ENCODE measurements at regions of chr7 and their contacts with region 1.

Region 1: GRCh38 chr7:100538654-100539435 is at the start of gene AGFG2:
- DNase-seq: peak; percentile 100
- H3K4me3 ChIP-seq: peak within 1 kb of the TSS; percentile 55 to 97 (median 90)
- H3K27ac ChIP-seq: peak within 1 kb of the TSS in 46 of 59 donors; percentile 14 to 93 (median 78)
- H3K27me3 ChIP-seq: no peaks in the 10 kb centered on the region
- CTCF ChIP-seq: peak in 26 of 56 donors; percentile 4 to 49 (median 17)
- total RNA-seq, gene AGFG2: 26.9 to 118 (median 44.7) TPM

Region 2: DNA sequence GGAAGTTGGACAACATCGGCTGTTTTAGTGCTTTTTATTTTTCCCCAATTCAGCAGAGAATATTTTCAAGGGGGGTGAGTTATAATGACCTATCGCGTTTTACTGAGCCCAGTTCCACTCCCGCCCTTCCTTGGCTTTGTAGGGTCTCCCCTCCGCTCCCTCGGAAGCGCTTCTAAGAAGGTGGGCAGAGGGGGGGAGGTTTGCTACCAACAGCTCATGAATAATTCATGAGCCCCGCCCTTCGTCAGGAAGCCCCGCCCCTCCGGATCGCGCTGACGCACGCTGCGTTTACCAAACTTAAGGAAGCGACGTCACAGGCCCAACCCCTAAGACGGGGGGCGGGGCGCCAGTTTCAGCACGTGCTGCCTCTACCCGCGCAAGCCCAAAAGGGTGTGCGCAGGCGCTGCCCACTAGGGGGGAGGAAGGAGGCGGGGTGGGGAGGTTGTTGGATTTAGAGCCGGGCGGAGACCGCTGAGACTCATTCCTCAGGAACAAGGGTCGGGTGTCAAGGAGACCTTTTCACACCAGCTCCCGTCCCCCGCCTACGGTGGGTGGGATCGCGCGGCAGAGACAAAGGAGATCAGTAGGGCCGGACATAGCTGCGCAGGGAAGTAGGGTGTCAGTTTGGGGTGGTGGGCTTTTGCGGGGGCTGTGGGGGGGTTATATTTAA is 109.7 kb before region 1 on chr7:
- intact Hi-C with region 1: loop called in 1 of 2 experiments (anchors 2 kb)
- DNase-seq: peak; percentile 99 to 100 (median 100)
- H3K4me3 ChIP-seq: peak overlapping the region; percentile 67 to 99 (median 88)
- H3K27ac ChIP-seq: peak overlapping the region; percentile 98 to 100 (median 100)
- H3K27me3 ChIP-seq: no peaks in the 10 kb centered on the region
- CTCF ChIP-seq: peak in 7 of 56 donors; percentile 4 to 21 (median 9)

Region 3: DNA sequence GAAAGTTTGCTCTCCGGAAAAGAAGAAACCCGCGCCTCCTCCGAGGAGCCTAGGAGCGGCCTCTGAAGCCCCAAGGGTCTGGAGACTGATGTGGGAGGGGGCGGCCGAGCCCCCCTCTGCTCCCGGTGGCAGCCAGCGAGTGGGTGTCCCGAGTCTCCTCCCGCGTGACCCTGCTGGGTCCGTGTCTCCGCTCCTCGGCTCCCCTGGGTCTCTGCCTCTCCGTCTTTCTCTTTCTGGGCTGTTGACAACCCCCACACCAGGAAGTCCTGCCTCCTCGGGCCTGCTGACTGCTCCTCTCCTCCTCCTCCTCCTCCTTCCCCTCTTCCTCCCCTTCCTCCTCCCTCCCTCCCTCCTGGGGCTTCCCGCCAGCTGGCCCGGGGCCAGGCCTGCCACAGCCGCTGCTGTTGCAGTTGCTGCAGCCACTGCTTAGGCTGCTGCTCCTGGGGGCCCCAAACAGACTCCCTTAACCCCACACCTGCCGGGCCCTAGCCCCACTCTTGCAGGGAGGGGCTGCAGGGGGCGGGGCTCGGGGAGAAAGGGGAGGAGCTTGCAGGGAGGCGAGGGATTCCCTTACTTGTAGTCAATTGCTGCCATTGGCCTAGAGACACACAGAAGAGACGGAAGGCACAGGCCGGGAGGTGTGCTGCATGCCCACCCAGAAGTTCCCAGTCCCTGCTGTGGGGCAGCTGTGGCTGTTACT is 59.7 kb before region 1 on chr7 and contains the start of gene TSC22D4:
- intact Hi-C with region 1: loop called in 1 of 2 experiments (anchors 5 kb)
- DNase-seq: peak; percentile 85 to 97 (median 96)
- H3K4me3 ChIP-seq: peak within 1 kb of the TSS; percentile 74 to 100 (median 95)
- H3K27ac ChIP-seq: peak within 1 kb of the TSS; percentile 55 to 98 (median 94)
- H3K27me3 ChIP-seq: no peaks in the 10 kb centered on the region
- CTCF ChIP-seq: peak in 25 of 56 donors; percentile 3 to 49 (median 24)
- total RNA-seq, gene TSC22D4: 142 to 595 (median 270) TPM

Region 4: GRCh38 chr7:100489824-100490223 is 49.0 kb before region 1 on chr7:
- intact Hi-C with region 1: loop called in 1 of 2 experiments (anchors 5 kb)
- DNase-seq: peak; percentile 74 to 99 (median 96)
- H3K4me3 ChIP-seq: peak overlapping the region in 43 of 59 donors; percentile 7 to 57 (median 29)
- H3K27ac ChIP-seq: peak overlapping the region in 35 of 59 donors; percentile 0 to 76 (median 56)
- H3K27me3 ChIP-seq: no peaks in the 10 kb centered on the region
- CTCF ChIP-seq: peak in 9 of 56 donors; percentile 10 to 31 (median 17)

Region 5: GRCh38 chr7:100586266-100587025 is 47.6 kb after region 1 on chr7 and contains the start of gene FBXO24:
- intact Hi-C with region 1: loop called in 1 of 2 experiments (anchors 5 kb)
- DNase-seq: peak; percentile 99 to 100 (median 100)
- H3K4me3 ChIP-seq: peak within 1 kb of the TSS; percentile 74 to 100 (median 99)
- H3K27ac ChIP-seq: peak within 1 kb of the TSS; percentile 61 to 99 (median 95)
- H3K27me3 ChIP-seq: no peaks in the 10 kb centered on the region
- CTCF ChIP-seq: peak in 5 of 56 donors; percentile 5 to 51 (median 13)
- total RNA-seq, gene FBXO24: 0.23 to 3.2 (median 1.1) TPM in 113 of 120 experiments, not detected in the others

Region 6: DNA sequence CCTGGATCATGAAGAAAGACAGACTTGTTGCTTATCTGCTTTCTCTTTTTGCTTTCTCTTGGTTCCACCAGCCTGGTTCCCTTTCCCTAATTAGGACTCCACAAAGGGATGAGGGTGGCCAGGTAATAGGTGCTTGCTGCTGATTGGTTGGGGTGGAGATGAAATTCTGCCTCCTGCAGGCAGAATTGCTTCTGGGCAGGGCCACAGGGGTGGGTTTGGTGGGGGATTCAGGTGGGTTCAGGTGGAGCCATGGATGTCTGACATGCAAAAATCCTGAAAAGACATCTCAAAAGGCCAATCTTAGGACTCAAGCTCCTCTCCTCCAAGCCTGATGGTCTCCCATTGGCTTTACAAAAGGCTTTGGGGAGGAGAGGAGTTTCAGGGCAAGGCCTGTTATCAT is 382.2 kb after region 1 on chr7:
- intact Hi-C with region 1: no loop called
- DNase-seq: no peak
- H3K4me3 ChIP-seq: no peak overlapping the region
- H3K27ac ChIP-seq: no peak overlapping the region
- H3K27me3 ChIP-seq: no peaks in the 10 kb centered on the region
- CTCF ChIP-seq: no peak

Measured in dorsolateral prefrontal cortex (tissue), 120 donors.